CD4-positive, alpha-beta memory T cell (primary cell): ENCODE measurements at regions of chr3 and their contacts with region 1.

Region 1: DNA sequence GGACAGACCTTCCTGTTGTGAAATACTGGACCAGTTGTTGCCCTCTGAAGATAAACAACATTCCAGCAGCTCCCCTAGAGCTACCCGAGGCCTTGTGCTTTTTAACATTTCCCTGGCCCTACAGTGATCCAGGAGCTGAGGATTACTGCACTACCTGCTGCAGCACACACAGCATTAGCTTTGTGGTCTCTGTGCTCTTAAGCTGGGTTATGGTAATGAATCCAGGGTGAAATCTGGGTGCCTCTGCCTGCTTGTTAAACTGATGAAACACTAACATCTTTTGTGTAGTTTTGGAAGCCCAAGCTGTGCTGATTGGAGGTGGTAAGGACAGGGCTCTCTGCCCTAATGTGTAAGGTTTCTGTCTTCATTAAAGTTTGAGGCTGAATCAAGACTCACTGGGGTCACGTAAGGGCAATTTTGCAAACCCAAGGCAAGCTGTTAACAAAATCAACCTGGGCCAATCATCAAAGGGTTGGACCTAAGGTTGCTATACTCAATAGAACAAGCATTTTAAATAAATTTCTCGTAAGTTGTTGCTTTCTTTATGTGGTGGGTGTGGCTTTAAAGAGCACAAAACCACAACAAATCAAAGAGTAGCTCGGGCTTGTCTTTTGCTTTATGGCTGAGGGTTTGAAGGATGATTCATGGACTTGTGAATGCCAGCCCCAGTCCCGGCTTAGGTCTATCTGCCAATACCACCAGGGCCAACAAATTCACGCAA is 183.9 kb downstream of the TPRG1 start:
- DNase-seq: peak; percentile 69 to 79 (median 73)
- H3K4me3 ChIP-seq: no peak overlapping the region
- H3K4me3 Mint-ChIP-seq: peak overlapping the region; percentile 55 to 83 (median 74)
- H3K27ac ChIP-seq: peak overlapping the region; percentile 30
- H3K27ac Mint-ChIP-seq: peak overlapping the region; percentile 64 to 97 (median 93)
- H3K4me1 ChIP-seq: peaks cover 37% of the 10 kb centered on the region
- H3K4me1 Mint-ChIP-seq: peaks cover 23 to 34% (median 31%) of the 10 kb centered on the region in 4 donors
- H3K27me3 ChIP-seq: no peaks in the 10 kb centered on the region
- H3K27me3 Mint-ChIP-seq: no peaks in the 10 kb centered on the region

Region 2: DNA sequence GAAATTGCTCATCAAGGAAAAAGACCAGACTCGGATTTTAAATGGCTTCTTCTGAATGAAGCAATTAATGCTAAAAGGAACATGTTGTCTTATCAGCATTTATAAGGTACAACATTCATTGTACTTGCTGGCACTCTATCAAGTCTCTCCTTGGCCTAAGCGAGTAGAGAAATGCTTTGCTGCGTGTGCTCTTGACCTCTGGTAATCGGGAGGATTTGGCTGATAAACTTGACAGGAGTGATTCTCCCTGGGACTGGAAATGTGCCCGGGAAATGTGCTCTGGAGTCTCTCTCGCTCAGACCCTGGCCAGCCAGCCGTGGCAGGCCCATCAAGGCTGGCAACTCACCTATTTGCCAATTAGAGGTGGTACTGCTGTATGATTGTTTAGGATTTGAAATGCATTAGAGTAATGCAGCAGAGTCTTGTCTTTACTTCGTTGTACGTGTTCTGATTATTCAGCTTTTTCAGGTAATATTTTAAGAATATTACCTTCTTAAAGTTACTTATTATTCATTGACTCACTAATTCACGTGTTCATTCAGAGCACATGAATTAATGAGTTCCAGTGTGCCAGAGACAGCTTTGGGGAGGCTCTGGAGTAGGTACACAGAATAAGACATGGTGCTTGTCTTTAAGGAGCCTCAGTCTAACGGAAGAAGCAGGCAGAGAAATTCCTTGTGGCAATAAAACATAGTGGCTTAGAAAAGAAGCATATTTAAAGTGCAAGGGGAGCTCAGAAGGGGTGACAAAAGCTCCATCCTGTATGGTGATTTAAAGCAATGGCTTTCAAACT is 231.8 kb before region 1 on chr3:
- CTCF ChIA-PET with region 1: no interaction called
- POLR2A ChIA-PET with region 1: no interaction called
- intact Hi-C with region 1: no loop called
- DNase-seq: no peak
- H3K4me3 ChIP-seq: no peak overlapping the region
- H3K4me3 Mint-ChIP-seq: peak overlapping the region in 6 of 8 donors; percentile 73 to 85 (median 78)
- H3K27ac ChIP-seq: no peak overlapping the region
- H3K27ac Mint-ChIP-seq: peak overlapping the region in 5 of 7 donors; percentile 7 to 93 (median 72)
- H3K4me1 ChIP-seq: peaks cover 45% of the 10 kb centered on the region
- H3K4me1 Mint-ChIP-seq: peaks cover 16 to 66% (median 34%) of the 10 kb centered on the region in 4 donors
- H3K27me3 ChIP-seq: no peaks in the 10 kb centered on the region
- H3K27me3 Mint-ChIP-seq: no peaks in the 10 kb centered on the region

Region 3: GRCh38 chr3:189288348-189289235 is 67.0 kb before region 1 on chr3:
- CTCF ChIA-PET with region 1: interaction called, 5 read pairs
- POLR2A ChIA-PET with region 1: no interaction called
- intact Hi-C with region 1: loop called (anchors 5 kb)
- DNase-seq: no peak
- H3K4me3 ChIP-seq: no peak overlapping the region
- H3K4me3 Mint-ChIP-seq: peak overlapping the region in 1 of 8 donors; percentile 7
- H3K27ac ChIP-seq: no peak overlapping the region
- H3K27ac Mint-ChIP-seq: peak overlapping the region in 2 of 7 donors; percentile 19 to 21
- H3K4me1 ChIP-seq: peaks cover 28% of the 10 kb centered on the region
- H3K4me1 Mint-ChIP-seq: peaks cover 26 to 33% (median 28%) of the 10 kb centered on the region in 4 donors
- H3K27me3 ChIP-seq: no peaks in the 10 kb centered on the region
- H3K27me3 Mint-ChIP-seq: no peaks in the 10 kb centered on the region

Region 4: DNA sequence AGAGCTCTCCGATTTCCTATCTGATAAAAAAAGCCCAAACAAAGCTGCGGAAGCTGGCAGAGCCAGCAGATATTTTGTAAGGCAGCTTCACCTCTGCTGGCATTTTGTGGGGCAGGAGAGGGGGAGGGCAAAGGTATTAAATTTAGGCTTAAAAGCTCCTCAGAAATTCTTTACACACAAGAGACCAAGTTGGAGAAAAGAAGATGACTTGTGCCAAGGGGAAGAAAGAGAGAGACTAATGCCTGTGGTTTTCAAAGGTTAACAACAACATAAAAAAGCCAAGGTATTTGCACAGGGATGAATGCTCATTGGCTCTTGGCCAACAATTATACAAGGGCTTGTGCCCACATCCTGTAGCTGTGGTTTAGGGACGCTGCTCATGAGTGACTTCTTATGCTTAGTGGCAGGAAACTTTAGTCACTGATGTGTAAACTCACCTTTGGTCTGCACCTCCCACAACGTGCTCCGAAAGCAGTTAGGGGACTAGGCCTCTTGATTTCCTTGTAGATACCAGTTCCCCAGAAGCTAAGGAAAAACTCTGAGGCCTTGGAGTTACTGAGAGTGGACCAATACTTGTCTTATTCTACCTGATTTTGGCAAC is 31.0 kb before region 1 on chr3:
- CTCF ChIA-PET with region 1: interaction called, 4 read pairs
- POLR2A ChIA-PET with region 1: interaction called, 46 read pairs
- intact Hi-C with region 1: loop called (anchors 1 kb)
- DNase-seq: peak; percentile 89 to 94 (median 93)
- H3K4me3 ChIP-seq: peak overlapping the region in 1 of 2 donors; percentile 6
- H3K4me3 Mint-ChIP-seq: peak overlapping the region; percentile 75 to 90 (median 84)
- H3K27ac ChIP-seq: peak overlapping the region; percentile 31
- H3K27ac Mint-ChIP-seq: peak overlapping the region; percentile 91 to 97 (median 96)
- H3K4me1 ChIP-seq: peaks cover 59% of the 10 kb centered on the region
- H3K4me1 Mint-ChIP-seq: peaks cover 43 to 66% (median 48%) of the 10 kb centered on the region in 4 donors
- H3K27me3 ChIP-seq: no peaks in the 10 kb centered on the region
- H3K27me3 Mint-ChIP-seq: no peaks in the 10 kb centered on the region

Region 5: GRCh38 chr3:189334064-189334920 is 21.3 kb before region 1 on chr3:
- CTCF ChIA-PET with region 1: interaction called, 7 read pairs
- POLR2A ChIA-PET with region 1: interaction called, 10 read pairs
- intact Hi-C with region 1: no loop called
- DNase-seq: peak in 4 of 5 donors; percentile 20 to 40 (median 33)
- H3K4me3 ChIP-seq: no peak overlapping the region
- H3K4me3 Mint-ChIP-seq: peak overlapping the region in 2 of 8 donors; percentile 12 to 16
- H3K27ac ChIP-seq: no peak overlapping the region
- H3K27ac Mint-ChIP-seq: peak overlapping the region in 5 of 7 donors; percentile 5 to 85 (median 20)
- H3K4me1 ChIP-seq: peaks cover 41% of the 10 kb centered on the region
- H3K4me1 Mint-ChIP-seq: peaks cover 34 to 48% (median 41%) of the 10 kb centered on the region in 4 donors
- H3K27me3 ChIP-seq: no peaks in the 10 kb centered on the region
- H3K27me3 Mint-ChIP-seq: no peaks in the 10 kb centered on the region

Region 6: GRCh38 chr3:189344996-189345395 is 10.6 kb before region 1 on chr3:
- CTCF ChIA-PET with region 1: interaction called, 14 read pairs
- POLR2A ChIA-PET with region 1: no interaction called
- intact Hi-C with region 1: no loop called
- DNase-seq: no peak
- H3K4me3 ChIP-seq: no peak overlapping the region
- H3K4me3 Mint-ChIP-seq: no peak overlapping the region
- H3K27ac ChIP-seq: no peak overlapping the region
- H3K27ac Mint-ChIP-seq: no peak overlapping the region
- H3K4me1 ChIP-seq: no peaks in the 10 kb centered on the region
- H3K4me1 Mint-ChIP-seq: no peaks in the 10 kb centered on the region
- H3K27me3 ChIP-seq: no peaks in the 10 kb centered on the region
- H3K27me3 Mint-ChIP-seq: no peaks in the 10 kb centered on the region